MCF 10A (cell line): ENCODE measurements at regions of chr12 and their contacts with region 1.

Region 1: DNA sequence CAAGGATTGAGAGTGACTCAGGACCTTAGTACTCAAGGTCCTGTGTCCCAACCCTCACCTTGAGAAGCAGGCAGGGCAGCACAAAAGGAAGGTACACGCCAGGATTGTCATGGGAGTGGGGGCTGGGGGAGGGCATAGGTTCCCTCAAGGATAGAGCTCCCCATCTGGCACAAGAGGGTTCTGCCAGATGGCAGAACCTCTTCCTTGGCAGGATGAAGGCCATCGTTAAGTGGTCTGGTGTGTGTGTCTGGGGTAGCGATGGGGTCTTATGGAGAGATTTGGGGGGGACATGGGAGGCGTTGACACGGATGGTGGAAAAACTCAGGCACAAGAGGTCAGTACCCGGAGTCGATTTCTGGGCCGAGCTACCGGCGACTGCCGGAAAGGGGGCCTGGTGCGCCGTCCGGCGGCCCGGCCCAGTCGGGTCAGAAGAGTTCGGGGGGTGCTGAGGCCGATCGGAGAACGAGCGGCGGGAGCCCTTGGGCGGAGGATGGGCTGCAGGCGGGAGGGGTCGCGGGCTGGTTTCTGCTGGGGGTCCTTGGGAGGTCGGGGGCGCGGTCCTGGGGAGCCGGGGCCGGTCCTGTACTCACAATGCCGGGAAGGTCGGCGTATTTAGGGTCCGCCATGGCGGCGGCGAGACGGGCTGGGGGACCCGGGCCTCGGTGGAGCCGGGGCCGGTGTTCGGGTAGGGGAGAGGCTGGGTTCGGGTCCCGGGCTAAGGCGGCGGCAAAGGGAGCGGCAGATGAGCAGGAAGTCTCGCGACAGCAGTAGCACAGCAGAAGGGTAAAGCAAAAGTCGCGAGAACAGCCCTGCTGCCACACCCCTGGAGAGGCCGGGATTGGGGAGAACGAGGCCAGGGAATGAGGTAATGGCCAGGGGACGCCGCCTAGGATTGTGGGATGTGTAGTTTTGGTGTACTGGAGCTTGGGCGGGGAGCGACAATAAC is at the start of gene DCTN2:
- DNase-seq: peak; percentile 98
- H3K4me3 Mint-ChIP-seq: peak within 1 kb of the TSS; percentile 93
- H3K27ac Mint-ChIP-seq: peak within 1 kb of the TSS; percentile 98
- H3K4me1 Mint-ChIP-seq: peaks cover 32% of the 10 kb centered on the region
- H3K27me3 Mint-ChIP-seq: no peaks in the 10 kb centered on the region
- CTCF ChIP-seq: peak; percentile 18
- total RNA-seq, gene DCTN2: 149 and 188 TPM in 2 replicates

Region 2: DNA sequence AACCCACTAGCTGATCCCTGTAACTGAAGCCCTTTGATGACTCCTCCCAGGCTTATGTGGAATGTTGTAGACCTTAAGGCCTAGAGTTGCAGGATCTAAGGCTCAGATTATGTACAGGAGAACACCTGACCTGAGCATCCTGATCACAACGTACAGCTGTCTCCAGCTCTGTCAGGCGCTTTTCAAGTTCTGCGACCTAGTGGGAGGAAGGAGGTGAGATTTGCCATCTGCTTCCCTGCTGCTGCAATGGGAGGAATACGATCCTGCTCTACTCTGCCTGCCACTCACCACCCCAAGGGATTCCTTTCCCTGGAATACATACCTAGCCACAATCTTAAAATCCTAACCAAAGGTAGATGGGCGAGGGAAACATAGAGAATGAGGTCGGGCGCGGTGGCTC is 13.6 kb before region 1 on chr12:
- CTCF ChIA-PET with region 1: interaction called, 7 read pairs
- POLR2A ChIA-PET with region 1: interaction called, 14 read pairs
- intact Hi-C with region 1: no loop called
- DNase-seq: no peak
- H3K4me3 Mint-ChIP-seq: no peak overlapping the region
- H3K27ac Mint-ChIP-seq: no peak overlapping the region
- H3K4me1 Mint-ChIP-seq: no peaks in the 10 kb centered on the region
- H3K27me3 Mint-ChIP-seq: no peaks in the 10 kb centered on the region
- CTCF ChIP-seq: no peak